ENCODE measurements at regions of chr2 and their contacts with region 1.

Region 1: DNA sequence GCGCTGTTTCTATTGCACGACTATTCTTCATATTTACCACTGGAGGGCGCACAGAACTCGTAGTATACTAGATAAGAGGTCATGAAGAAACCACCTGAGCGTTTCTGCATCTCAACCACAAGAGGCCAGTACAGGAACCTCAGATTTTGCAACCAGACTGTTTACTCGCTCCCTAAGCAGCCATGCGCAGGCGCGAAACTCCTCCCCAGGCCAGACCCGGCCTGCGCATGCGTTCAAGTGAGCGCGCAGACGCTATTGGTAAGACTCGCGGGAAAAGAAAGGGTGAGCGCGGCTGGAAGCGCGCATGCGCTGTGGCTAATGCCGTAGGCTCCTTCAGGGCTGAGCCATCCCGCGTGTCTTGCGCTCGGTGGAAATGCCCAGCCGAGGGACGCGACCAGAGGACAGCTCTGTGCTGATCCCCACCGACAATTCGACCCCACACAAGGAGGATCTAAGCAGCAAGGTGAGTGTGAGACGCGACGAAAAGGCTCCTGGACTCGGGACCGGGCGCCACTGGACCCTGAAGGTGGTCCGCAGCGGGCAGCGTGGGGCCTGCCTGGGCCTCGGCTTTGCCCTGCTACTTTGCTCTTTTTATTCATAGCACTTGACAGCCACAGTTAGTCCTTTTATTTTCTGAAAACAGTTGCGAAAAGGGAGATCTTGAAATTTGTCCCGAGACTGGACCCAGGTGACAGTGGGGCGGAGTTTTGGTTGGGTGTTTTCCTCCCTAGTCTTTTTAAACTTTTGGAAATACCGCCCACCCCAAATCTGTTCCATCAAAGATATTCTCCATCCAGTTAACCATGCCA is at the start of gene ASNSD1:
- DNase-seq: peak; percentile 100
- ATAC-seq: peak; percentile 94
- H3K4me3 ChIP-seq: peak within 1 kb of the TSS; percentile 42 to 100 (median 91)
- H3K4me3 Mint-ChIP-seq: no peak within 1 kb of the TSS
- H3K27ac ChIP-seq: peak within 1 kb of the TSS; percentile 77 to 95
- H3K27ac Mint-ChIP-seq: no peak within 1 kb of the TSS
- H3K4me1 ChIP-seq: peaks cover 21 to 30% of the 10 kb centered on the region in 2 donors
- H3K4me1 Mint-ChIP-seq: peaks cover 32% of the 10 kb centered on the region
- H3K27me3 ChIP-seq: no peaks in the 10 kb centered on the region
- H3K27me3 Mint-ChIP-seq: no peaks in the 10 kb centered on the region
- CTCF ChIP-seq: peak; percentile 93
- total RNA-seq, gene ASNSD1: 25.3 and 29.8 TPM in 2 replicates

Region 2: GRCh38 chr2:189440947-189441708 is 220.2 kb before region 1 on chr2 and contains the start of gene WDR75:
- CTCF ChIA-PET with region 1: no interaction called
- POLR2A ChIA-PET with region 1: no interaction called
- intact Hi-C with region 1: loop called (anchors 1 kb)
- DNase-seq: peak; percentile 96
- ATAC-seq: peak; percentile 95
- H3K4me3 ChIP-seq: peak within 1 kb of the TSS; percentile 78 to 97 (median 91)
- H3K4me3 Mint-ChIP-seq: peak within 1 kb of the TSS; percentile 100
- H3K27ac ChIP-seq: peak within 1 kb of the TSS; percentile 93 to 97
- H3K27ac Mint-ChIP-seq: peak within 1 kb of the TSS; percentile 99
- H3K4me1 ChIP-seq: peaks cover 14 to 23% of the 10 kb centered on the region in 2 donors
- H3K4me1 Mint-ChIP-seq: peaks cover 29% of the 10 kb centered on the region
- H3K27me3 ChIP-seq: no peaks in the 10 kb centered on the region
- H3K27me3 Mint-ChIP-seq: no peaks in the 10 kb centered on the region
- CTCF ChIP-seq: no peak
- total RNA-seq, gene WDR75: 48.3 and 51.2 TPM in 2 replicates

Region 3: GRCh38 chr2:189549449-189549832 is 111.9 kb before region 1 on chr2:
- CTCF ChIA-PET with region 1: no interaction called
- POLR2A ChIA-PET with region 1: no interaction called
- intact Hi-C with region 1: no loop called
- DNase-seq: no peak
- ATAC-seq: no peak
- H3K4me3 ChIP-seq: no peak overlapping the region
- H3K4me3 Mint-ChIP-seq: no peak overlapping the region
- H3K27ac ChIP-seq: no peak overlapping the region
- H3K27ac Mint-ChIP-seq: no peak overlapping the region
- H3K4me1 ChIP-seq: no peaks in the 10 kb centered on the region
- H3K4me1 Mint-ChIP-seq: no peaks in the 10 kb centered on the region
- H3K27me3 ChIP-seq: no peaks in the 10 kb centered on the region
- H3K27me3 Mint-ChIP-seq: peaks cover 9% of the 10 kb centered on the region
- CTCF ChIP-seq: no peak

Region 4: DNA sequence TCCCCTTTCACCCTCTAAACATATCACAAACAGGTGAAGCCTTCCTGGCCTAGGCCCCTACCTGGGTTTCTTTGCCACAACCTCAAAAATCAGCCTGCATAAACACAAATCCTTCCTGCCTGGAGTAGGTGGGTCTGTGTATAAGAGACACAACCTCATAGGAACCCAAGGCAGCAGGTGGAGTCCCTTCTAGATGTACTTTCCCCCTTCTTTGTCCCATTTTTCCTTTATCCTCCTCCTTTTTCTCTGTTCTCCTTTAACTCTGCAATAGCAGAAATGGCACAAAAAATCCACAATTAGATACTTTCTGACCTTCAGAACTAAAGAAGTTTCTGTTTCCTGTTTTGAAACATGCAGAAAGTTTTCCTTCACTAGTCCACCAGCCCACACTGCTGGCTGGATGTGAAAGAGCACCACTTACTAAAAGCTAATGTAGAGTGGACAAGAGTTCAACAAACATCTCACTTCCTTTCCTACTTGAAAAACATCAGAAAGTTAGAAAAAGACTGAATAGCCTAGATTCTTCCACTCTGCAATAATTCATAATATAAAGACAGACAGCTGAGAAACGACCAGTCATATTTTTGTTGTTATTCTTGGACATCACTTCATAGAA is 91.9 kb before region 1 on chr2:
- CTCF ChIA-PET with region 1: no interaction called
- POLR2A ChIA-PET with region 1: no interaction called
- intact Hi-C with region 1: no loop called
- DNase-seq: no peak
- ATAC-seq: no peak
- H3K4me3 ChIP-seq: no peak overlapping the region
- H3K4me3 Mint-ChIP-seq: no peak overlapping the region
- H3K27ac ChIP-seq: no peak overlapping the region
- H3K27ac Mint-ChIP-seq: no peak overlapping the region
- H3K4me1 ChIP-seq: no peaks in the 10 kb centered on the region
- H3K4me1 Mint-ChIP-seq: peaks cover 3% of the 10 kb centered on the region
- H3K27me3 ChIP-seq: no peaks in the 10 kb centered on the region
- H3K27me3 Mint-ChIP-seq: peaks cover 9% of the 10 kb centered on the region
- CTCF ChIP-seq: no peak

Region 5: GRCh38 chr2:189698020-189698887 is 36.9 kb after region 1 on chr2:
- CTCF ChIA-PET with region 1: interaction called, 74 read pairs
- POLR2A ChIA-PET with region 1: no interaction called
- intact Hi-C with region 1: loop called (anchors 1 kb)
- DNase-seq: peak; percentile 70
- ATAC-seq: peak; percentile 57
- H3K4me3 ChIP-seq: no peak overlapping the region
- H3K4me3 Mint-ChIP-seq: no peak overlapping the region
- H3K27ac ChIP-seq: no peak overlapping the region
- H3K27ac Mint-ChIP-seq: peak overlapping the region; percentile 5
- H3K4me1 ChIP-seq: peaks cover 0 to 4% of the 10 kb centered on the region in 2 donors
- H3K4me1 Mint-ChIP-seq: peaks cover 2% of the 10 kb centered on the region
- H3K27me3 ChIP-seq: no peaks in the 10 kb centered on the region
- H3K27me3 Mint-ChIP-seq: no peaks in the 10 kb centered on the region
- CTCF ChIP-seq: peak; percentile 82

Region 6: GRCh38 chr2:189762551-189763298 is 101.4 kb after region 1 on chr2 and contains the start of gene OSGEPL1:
- CTCF ChIA-PET with region 1: interaction called, 21 read pairs
- POLR2A ChIA-PET with region 1: interaction called, 11 read pairs
- intact Hi-C with region 1: loop called (anchors 1 kb)
- DNase-seq: peak; percentile 96
- ATAC-seq: peak; percentile 92
- H3K4me3 ChIP-seq: peak within 1 kb of the TSS; percentile 67 to 100 (median 95)
- H3K4me3 Mint-ChIP-seq: peak within 1 kb of the TSS; percentile 98
- H3K27ac ChIP-seq: peak within 1 kb of the TSS; percentile 77 to 89
- H3K27ac Mint-ChIP-seq: peak within 1 kb of the TSS; percentile 98
- H3K4me1 ChIP-seq: peaks cover 9 to 10% of the 10 kb centered on the region in 2 donors
- H3K4me1 Mint-ChIP-seq: peaks cover 6% of the 10 kb centered on the region
- H3K27me3 ChIP-seq: no peaks in the 10 kb centered on the region
- H3K27me3 Mint-ChIP-seq: no peaks in the 10 kb centered on the region
- CTCF ChIP-seq: peak; percentile 73
- total RNA-seq, gene OSGEPL1: 11.2 and 12.6 TPM in 2 replicates

Region 7: GRCh38 chr2:190069936-190070696 is 408.8 kb after region 1 on chr2:
- CTCF ChIA-PET with region 1: interaction called, 5 read pairs
- POLR2A ChIA-PET with region 1: no interaction called
- intact Hi-C with region 1: loop called (anchors 1 kb)
- DNase-seq: peak; percentile 70
- ATAC-seq: peak; percentile 51
- H3K4me3 ChIP-seq: no peak overlapping the region
- H3K4me3 Mint-ChIP-seq: no peak overlapping the region
- H3K27ac ChIP-seq: no peak overlapping the region
- H3K27ac Mint-ChIP-seq: no peak overlapping the region
- H3K4me1 ChIP-seq: no peaks in the 10 kb centered on the region
- H3K4me1 Mint-ChIP-seq: no peaks in the 10 kb centered on the region
- H3K27me3 ChIP-seq: no peaks in the 10 kb centered on the region
- H3K27me3 Mint-ChIP-seq: no peaks in the 10 kb centered on the region
- CTCF ChIP-seq: peak; percentile 76

Region 8: GRCh38 chr2:190376591-190377245 is 715.4 kb after region 1 on chr2:
- CTCF ChIA-PET with region 1: no interaction called
- POLR2A ChIA-PET with region 1: no interaction called
- intact Hi-C with region 1: loop called (anchors 2 kb)
- DNase-seq: no peak
- ATAC-seq: no peak
- H3K4me3 ChIP-seq: no peak overlapping the region
- H3K4me3 Mint-ChIP-seq: no peak overlapping the region
- H3K27ac ChIP-seq: no peak overlapping the region
- H3K27ac Mint-ChIP-seq: no peak overlapping the region
- H3K4me1 ChIP-seq: no peaks in the 10 kb centered on the region
- H3K4me1 Mint-ChIP-seq: peaks cover 2% of the 10 kb centered on the region
- H3K27me3 ChIP-seq: no peaks in the 10 kb centered on the region
- H3K27me3 Mint-ChIP-seq: no peaks in the 10 kb centered on the region
- CTCF ChIP-seq: no peak

Measured in B cell (primary cell).